ENCODE measurements at regions of chr12 and their contacts with region 1.

Region 1: DNA sequence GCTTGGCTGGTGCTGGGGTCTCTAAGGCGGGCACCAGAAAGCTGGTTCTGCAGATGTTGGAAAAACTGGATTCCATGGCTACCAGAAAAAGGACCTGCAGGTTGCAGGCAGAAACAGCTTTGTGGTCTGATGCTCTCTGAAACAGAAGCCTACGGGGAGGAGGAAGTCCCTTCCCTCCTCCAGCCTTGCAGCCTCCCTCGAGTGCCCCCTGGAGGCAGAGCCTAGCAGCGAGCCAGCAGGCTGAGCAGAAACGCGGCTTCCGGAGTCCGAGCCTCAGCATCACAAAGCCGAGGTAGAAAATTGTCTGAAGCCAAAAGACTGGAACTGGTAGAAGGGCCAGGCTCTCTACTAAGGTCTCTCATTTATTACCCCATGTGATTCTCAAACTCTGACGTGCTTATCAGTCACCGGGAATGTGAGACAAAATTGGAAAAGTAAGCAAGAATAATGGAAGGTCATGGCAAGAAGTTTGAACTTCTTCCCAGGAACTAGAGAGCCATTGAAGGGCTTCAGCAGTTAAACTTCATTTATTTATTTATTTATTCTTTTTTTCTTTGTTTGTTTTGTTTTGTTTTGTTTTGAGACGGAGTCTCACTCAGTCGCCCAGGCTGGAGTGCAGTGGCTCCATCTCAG is 82.2 kb upstream of the CPSF6 start:
- DNase-seq: peak; percentile 61
- H3K4me3 ChIP-seq: no peak overlapping the region
- H3K27ac ChIP-seq: no peak overlapping the region
- H3K4me1 ChIP-seq: no peaks in the 10 kb centered on the region
- H3K27me3 ChIP-seq: no peaks in the 10 kb centered on the region
- CTCF ChIP-seq: peak; percentile 27 to 75 (median 58)
- POLR2A ChIP-seq: no peak

Region 2: DNA sequence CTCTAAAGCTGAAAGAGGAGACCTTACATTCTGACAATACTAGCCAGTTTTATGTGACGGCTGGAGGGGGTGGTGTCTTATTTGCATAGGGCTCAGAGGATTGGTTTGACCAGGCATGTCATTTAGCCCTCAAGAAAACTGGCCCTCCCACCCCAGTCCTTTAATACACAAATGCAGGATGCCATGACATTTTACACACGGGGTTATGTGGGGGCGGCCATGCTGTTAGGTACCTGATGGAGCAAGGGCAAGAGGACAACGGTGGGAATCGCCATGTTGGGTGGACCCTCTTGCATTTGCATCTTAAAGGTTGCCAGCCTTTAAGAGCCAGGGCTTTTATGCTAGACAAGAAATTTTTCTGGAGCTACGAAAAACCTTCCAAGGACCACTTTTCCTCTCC is 325.9 kb before region 1 on chr12:
- intact Hi-C with region 1: loop called (anchors 10 kb)
- DNase-seq: no peak
- H3K4me3 ChIP-seq: no peak overlapping the region
- H3K27ac ChIP-seq: no peak overlapping the region
- H3K4me1 ChIP-seq: no peaks in the 10 kb centered on the region
- H3K27me3 ChIP-seq: no peaks in the 10 kb centered on the region
- CTCF ChIP-seq: no peak
- POLR2A ChIP-seq: no peak

Region 3: GRCh38 chr12:68866950-68867349 is 290.2 kb before region 1 on chr12:
- intact Hi-C with region 1: loop called (anchors 10 kb)
- DNase-seq: no peak
- H3K4me3 ChIP-seq: no peak overlapping the region
- H3K27ac ChIP-seq: no peak overlapping the region
- H3K4me1 ChIP-seq: no peaks in the 10 kb centered on the region
- H3K27me3 ChIP-seq: no peaks in the 10 kb centered on the region
- CTCF ChIP-seq: no peak
- POLR2A ChIP-seq: no peak

Region 4: DNA sequence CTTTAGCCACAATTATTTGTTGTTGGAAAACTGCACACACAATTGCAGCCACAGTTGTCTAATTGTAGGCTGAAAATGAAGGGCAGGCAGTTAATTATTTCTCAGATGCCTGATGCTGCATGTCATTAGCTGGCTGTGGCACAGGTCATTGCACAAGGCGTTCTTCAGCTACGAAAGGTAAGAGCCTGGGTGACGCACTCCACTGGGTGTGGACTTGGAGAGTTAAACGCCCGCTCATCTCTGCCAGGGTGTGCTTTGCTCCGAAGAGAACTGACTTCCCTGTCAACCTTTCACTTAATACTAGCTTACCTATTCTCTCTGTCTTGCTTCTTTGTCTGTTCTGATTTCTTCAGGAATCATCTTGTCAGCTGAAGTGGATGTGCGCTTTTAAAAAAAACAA is 132.7 kb before region 1 on chr12:
- intact Hi-C with region 1: no loop called
- DNase-seq: peak; percentile 53
- H3K4me3 ChIP-seq: no peak overlapping the region
- H3K27ac ChIP-seq: no peak overlapping the region
- H3K4me1 ChIP-seq: no peaks in the 10 kb centered on the region
- H3K27me3 ChIP-seq: no peaks in the 10 kb centered on the region
- CTCF ChIP-seq: no peak
- POLR2A ChIP-seq: no peak

Region 5: DNA sequence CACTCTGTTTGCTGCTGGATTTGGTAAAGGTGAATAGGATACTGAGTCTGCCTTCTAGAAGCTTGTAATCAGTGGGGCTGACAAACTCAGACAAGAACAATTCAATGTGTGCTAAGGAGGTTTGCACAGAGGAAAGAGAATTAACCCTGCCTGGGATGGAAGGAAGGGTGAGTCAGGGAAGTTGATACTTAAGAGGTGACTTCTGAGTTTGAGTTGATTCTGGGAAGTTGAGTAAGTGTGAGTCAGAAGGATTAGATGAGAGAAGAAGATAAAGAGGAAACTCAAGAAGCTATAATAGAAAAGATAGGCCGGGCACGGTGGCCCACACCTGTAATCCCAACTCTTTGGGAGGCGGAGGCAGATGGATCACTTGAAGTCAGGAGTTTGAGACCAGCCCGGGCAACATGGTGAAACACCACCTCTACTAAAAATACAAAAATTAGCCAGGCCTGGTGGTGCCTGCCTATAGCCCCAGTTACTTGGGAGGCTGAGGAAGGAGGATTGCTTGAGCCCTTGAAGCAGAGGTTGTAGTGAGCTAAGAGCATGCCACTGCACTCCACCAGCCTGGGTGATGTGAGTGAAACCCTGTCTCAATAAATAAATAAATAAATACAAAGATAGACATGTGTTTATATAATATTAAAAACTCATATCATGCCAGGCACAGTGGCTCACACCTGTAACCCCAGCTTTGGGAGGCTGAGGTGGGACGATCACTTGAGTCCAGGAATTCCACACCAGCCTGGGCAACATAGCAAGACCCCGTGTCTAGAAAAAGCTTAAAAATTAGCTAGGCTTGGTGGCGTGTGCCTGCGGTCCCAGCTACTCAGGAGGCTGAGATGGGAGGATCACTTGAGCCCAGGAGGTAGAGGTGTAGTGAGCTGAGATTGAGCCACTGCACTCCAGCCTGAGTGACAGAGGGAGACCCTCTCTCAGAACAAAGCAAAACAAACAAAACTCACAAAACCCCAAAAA is 97.4 kb before region 1 on chr12:
- intact Hi-C with region 1: loop called (anchors 10 kb)
- DNase-seq: no peak
- H3K4me3 ChIP-seq: no peak overlapping the region
- H3K27ac ChIP-seq: no peak overlapping the region
- H3K4me1 ChIP-seq: peaks cover 3% of the 10 kb centered on the region
- H3K27me3 ChIP-seq: no peaks in the 10 kb centered on the region
- CTCF ChIP-seq: no peak
- POLR2A ChIP-seq: no peak

Region 6: DNA sequence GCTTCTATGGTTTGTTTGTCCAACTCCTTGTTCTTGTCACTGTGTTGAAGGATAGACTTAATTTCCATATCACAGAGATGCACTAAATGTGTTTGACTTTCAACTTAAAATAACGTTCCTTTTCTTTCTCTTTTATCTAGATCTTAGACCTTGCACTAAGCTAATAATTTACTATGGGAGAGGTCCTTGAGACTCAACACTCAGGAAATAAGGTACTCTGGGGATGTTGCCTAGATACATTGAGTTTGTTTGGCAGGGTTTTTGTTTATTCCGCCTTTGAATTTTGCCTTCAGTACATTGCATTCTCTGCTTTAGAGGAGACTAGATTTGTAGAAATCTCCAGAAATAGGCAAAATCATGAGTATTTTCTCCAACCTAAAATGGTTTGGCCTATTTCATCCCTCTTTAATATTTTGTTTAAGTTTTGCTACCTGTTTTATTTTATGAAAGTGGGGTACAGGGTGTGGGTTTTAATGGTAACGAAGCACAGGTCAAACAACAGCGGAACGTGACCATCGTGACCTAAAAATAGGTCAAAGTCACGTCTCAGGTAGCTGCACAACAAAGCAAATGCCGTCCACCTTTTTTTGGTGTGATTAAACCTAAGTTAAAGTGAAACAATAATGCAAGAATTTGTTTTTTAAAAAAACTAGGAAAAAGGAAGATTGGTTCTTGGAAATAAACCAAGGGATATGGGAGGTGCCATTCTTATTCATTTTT is 33.1 kb before region 1 on chr12:
- intact Hi-C with region 1: no loop called
- DNase-seq: no peak
- H3K4me3 ChIP-seq: no peak overlapping the region
- H3K27ac ChIP-seq: no peak overlapping the region
- H3K4me1 ChIP-seq: no peaks in the 10 kb centered on the region
- H3K27me3 ChIP-seq: no peaks in the 10 kb centered on the region
- CTCF ChIP-seq: no peak
- POLR2A ChIP-seq: no peak

Region 7: GRCh38 chr12:69254046-69254445 is 96.9 kb after region 1 on chr12:
- intact Hi-C with region 1: loop called (anchors 5 kb)
- DNase-seq: no peak
- H3K4me3 ChIP-seq: no peak overlapping the region
- H3K27ac ChIP-seq: no peak overlapping the region
- H3K4me1 ChIP-seq: no peaks in the 10 kb centered on the region
- H3K27me3 ChIP-seq: no peaks in the 10 kb centered on the region
- CTCF ChIP-seq: peak; percentile 11 to 54 (median 48)
- POLR2A ChIP-seq: no peak

Region 8: GRCh38 chr12:69490920-69491643 is 333.9 kb after region 1 on chr12:
- intact Hi-C with region 1: no loop called
- DNase-seq: no peak
- H3K4me3 ChIP-seq: no peak overlapping the region
- H3K27ac ChIP-seq: no peak overlapping the region
- H3K4me1 ChIP-seq: no peaks in the 10 kb centered on the region
- H3K27me3 ChIP-seq: no peaks in the 10 kb centered on the region
- CTCF ChIP-seq: no peak
- POLR2A ChIP-seq: no peak

Region 9: DNA sequence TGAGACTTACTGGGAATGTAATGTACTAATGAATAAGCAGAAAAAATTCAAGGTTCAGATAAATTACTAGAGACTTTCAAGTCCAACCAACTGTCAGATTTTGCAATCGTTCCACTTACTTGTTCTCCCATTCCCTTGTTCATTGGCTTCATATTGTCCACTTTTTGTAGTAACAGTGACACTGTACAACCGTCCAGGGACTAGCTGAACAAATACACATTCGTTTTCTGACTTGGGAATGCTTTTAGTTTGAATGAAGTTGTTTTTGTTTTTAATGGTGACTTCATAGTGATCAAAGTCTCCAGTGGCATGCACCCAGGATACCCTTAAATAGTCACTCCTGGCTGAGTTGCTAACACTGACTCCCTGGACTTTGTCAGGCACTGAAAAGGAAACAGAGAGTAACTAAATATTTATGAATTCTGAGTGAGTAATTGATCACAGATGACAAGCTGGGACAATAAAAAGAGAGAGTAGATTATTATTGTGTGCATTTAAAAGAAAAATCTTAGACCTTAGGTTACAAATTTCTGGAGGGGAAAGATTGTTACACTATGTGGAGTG is 1414.6 kb after region 1 on chr12:
- intact Hi-C with region 1: no loop called
- DNase-seq: no peak
- H3K4me3 ChIP-seq: no peak overlapping the region
- H3K27ac ChIP-seq: no peak overlapping the region
- H3K4me1 ChIP-seq: no peaks in the 10 kb centered on the region
- H3K27me3 ChIP-seq: no peaks in the 10 kb centered on the region
- CTCF ChIP-seq: no peak
- POLR2A ChIP-seq: no peak

Measured in prostate gland (tissue), 2 donors.